A673 (cell line): ENCODE measurements at regions of chr4 and their contacts with region 1.

Region 1: GRCh38 chr4:154807042-154807630 is 26.1 kb downstream of the RBM46 start:
- DNase-seq: peak; percentile 51
- H3K4me3 ChIP-seq: no peak overlapping the region
- H3K27ac ChIP-seq: no peak overlapping the region
- H3K4me1 ChIP-seq: no peaks in the 10 kb centered on the region
- H3K27me3 ChIP-seq: no peaks in the 10 kb centered on the region
- CTCF ChIP-seq: peak; percentile 87

Region 2: GRCh38 chr4:154911097-154911496 is 104.0 kb after region 1 on chr4:
- CTCF ChIA-PET with region 1: no interaction called
- POLR2A ChIA-PET with region 1: no interaction called
- intact Hi-C with region 1: loop called (anchors 5 kb)
- DNase-seq: no peak
- H3K4me3 ChIP-seq: no peak overlapping the region
- H3K27ac ChIP-seq: no peak overlapping the region
- H3K4me1 ChIP-seq: no peaks in the 10 kb centered on the region
- H3K27me3 ChIP-seq: peaks cover 3% of the 10 kb centered on the region
- CTCF ChIP-seq: peak; percentile 31; the same call in 1 of the 2 replicates

Region 3: GRCh38 chr4:154928640-154929257 is 121.6 kb after region 1 on chr4:
- CTCF ChIA-PET with region 1: interaction called, 5 read pairs
- POLR2A ChIA-PET with region 1: no interaction called
- intact Hi-C with region 1: loop called (anchors 2 kb)
- DNase-seq: peak; percentile 27
- H3K4me3 ChIP-seq: no peak overlapping the region
- H3K27ac ChIP-seq: no peak overlapping the region
- H3K4me1 ChIP-seq: no peaks in the 10 kb centered on the region
- H3K27me3 ChIP-seq: no peaks in the 10 kb centered on the region
- CTCF ChIP-seq: peak; percentile 54

Region 4: GRCh38 chr4:155526452-155527169 is 719.5 kb after region 1 on chr4:
- CTCF ChIA-PET with region 1: no interaction called
- POLR2A ChIA-PET with region 1: no interaction called
- intact Hi-C with region 1: no loop called
- DNase-seq: no peak
- H3K4me3 ChIP-seq: no peak overlapping the region
- H3K27ac ChIP-seq: no peak overlapping the region
- H3K4me1 ChIP-seq: no peaks in the 10 kb centered on the region
- H3K27me3 ChIP-seq: no peaks in the 10 kb centered on the region
- CTCF ChIP-seq: no peak